ENCODE measurements at regions of chr1 and their contacts with region 1.

Region 1: GRCh38 chr1:204446370-204447111 is 34.9 kb upstream of the PPP1R15B start:
- DNase-seq: peak; percentile 68 to 88 (median 79)
- H3K4me3 ChIP-seq: no peak overlapping the region
- H3K27ac ChIP-seq: no peak overlapping the region
- H3K4me1 ChIP-seq: peaks cover 0 to 15% of the 10 kb centered on the region in 2 donors
- H3K27me3 ChIP-seq: no peaks in the 10 kb centered on the region
- CTCF ChIP-seq: peak; percentile 59 to 82 (median 73)
- POLR2A ChIP-seq: no peak

Region 2: GRCh38 chr1:204350857-204351573 is 95.5 kb before region 1 on chr1:
- intact Hi-C with region 1: no loop called
- DNase-seq: peak; percentile 74 to 93 (median 76)
- H3K4me3 ChIP-seq: no peak overlapping the region
- H3K27ac ChIP-seq: peak overlapping the region in 1 of 5 donors; percentile 27
- H3K4me1 ChIP-seq: peaks cover 0 to 19% of the 10 kb centered on the region in 2 donors
- H3K27me3 ChIP-seq: no peaks in the 10 kb centered on the region
- CTCF ChIP-seq: no peak
- POLR2A ChIP-seq: no peak

Region 3: DNA sequence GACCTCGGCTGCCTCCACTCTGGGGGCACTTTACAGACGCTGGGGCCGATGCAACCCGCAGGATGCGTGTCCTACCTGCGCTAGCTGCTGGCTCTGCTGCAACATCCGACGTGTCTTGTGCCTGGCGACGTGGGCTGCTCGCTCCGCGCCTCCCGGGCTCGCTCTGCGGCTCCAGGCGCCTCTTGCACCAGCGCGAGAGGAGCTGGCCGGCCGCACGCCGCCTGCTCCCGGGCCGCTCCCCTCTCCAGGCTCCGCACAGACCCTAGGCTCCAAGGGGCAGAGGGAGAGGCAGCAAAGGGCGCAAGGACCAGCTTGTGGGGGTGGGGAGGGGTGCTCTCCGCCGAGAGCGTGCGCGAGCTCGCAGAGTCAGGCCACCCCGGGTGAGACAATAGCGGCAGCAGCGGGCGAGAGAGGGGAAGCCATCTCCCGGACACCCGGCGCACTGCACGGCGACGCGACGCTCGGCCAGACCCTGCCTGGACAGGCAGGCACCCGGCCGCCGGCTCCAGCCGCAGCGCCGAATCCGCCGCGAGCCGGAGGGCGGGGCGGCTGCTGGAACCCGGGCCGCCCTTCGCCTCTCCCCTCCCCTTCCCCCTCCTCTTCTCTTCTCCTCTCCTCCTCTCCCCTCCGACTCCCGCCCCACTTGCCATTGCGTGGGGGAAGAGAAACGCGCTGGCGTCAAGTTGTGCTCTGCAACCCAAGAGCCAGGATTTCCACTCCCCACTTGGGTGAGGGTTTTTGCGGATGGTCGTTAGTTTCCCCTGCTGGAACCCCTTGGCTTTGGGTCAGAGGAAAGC is 47.9 kb after region 1 on chr1 and contains the start of gene PIK3C2B:
- intact Hi-C with region 1: loop called in 1 of 2 experiments (anchors 5 kb)
- DNase-seq: peak; percentile 77 to 90 (median 86)
- H3K4me3 ChIP-seq: peak within 1 kb of the TSS; percentile 55 to 96 (median 86)
- H3K27ac ChIP-seq: peak within 1 kb of the TSS; percentile 78 to 95 (median 91)
- H3K4me1 ChIP-seq: peaks cover 6 to 27% of the 10 kb centered on the region in 2 donors
- H3K27me3 ChIP-seq: no peaks in the 10 kb centered on the region
- CTCF ChIP-seq: peak; percentile 19 to 76 (median 50)
- POLR2A ChIP-seq: peak; percentile 59 to 84
- total RNA-seq, gene PIK3C2B: 3.5 to 22.9 (median 16.0) TPM

Region 4: DNA sequence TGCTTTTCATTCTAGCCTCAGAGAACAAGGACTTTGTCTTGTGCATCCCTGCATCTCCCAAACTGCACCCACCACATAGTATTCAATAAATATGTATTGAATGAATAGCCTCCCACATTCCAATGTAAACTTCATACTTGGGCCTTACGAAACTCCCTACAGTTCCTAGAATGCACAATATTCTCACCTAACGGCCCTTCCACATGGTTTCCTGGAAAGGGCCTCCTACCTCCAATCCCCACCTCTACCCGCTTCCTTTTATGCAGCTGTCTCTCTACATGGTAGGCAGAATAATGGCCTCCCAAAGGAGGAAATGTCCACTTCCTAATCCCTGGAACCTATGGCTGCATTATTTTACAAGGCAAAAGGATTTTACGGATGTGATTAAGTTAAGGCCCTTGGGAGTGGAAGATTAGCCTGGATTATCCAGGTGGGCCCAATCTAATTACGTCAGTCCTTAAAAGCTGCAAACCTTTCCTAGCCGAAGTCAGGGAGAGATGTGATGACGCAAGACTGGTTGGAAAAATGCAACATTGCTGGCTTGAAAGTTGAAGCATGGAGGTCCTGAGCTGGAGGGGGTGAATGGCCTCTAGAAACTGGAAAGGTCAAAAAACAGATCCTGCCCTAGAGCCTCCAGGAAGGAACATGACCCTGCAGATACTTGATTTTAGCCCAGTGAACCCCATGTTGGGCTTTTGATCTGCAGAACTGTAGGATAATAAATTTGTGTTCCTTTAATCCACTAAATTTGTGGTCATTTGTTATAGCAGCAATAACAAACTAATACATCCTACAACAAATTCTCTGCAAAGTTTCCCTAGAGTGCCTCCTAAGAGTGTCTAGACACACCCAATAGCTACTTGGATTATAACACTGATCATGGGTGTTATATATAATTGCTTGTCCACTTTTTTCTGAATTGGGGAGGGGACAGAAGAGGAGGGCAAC is 53.3 kb after region 1 on chr1:
- intact Hi-C with region 1: loop called (anchors 2 to 5 kb)
- DNase-seq: no peak
- H3K4me3 ChIP-seq: no peak overlapping the region
- H3K27ac ChIP-seq: no peak overlapping the region
- H3K4me1 ChIP-seq: peaks cover 0 to 12% of the 10 kb centered on the region in 2 donors
- H3K27me3 ChIP-seq: no peaks in the 10 kb centered on the region
- CTCF ChIP-seq: no peak
- POLR2A ChIP-seq: no peak